ENCODE measurements at regions of chr10 and their contacts with region 1.

Region 1: DNA sequence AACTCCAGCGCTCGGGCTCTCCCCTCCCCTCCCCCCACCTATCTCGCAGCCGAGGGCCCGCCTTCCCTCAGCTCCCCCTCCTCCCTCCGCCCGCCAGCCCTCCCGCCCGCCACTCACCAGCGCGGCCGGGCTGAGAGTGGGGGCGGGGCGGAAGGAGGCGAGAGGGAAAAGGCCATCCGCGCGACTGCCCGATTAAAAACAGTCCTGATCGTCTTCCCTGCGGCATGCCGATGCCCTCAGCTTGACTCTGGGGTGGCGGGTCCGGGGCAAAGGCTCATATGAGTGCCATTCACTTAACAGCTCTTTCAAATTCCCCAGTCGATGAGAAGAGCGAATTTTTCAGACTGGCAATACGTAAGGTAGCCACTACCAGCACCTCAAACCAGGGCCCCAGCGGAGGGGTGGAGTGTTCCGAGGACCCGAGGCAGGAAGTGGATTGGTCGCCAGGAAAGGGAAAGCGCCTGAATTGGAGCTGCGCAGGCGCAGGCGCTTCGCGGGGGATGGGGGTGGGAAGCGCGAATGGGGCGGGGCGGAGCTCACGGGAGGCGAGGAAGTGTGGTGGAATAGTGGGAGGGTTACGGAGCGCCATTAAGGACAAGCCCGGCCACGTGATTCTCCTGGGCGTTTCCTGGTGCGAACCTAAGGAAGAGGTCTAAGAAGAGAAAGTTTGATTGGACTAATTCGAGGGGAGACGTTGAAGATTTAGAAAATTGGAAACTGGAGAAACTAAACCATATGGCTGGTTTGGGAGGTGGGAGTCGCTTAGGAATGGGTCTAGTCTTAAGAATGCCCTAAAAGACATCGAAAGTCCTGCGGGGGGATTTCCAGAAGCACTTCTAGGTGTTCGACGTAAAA is at the start of gene UPF2:
- DNase-seq: peak; percentile 99
- H3K4me3 ChIP-seq: peak within 1 kb of the TSS; percentile 99
- H3K27ac ChIP-seq: peak within 1 kb of the TSS; percentile 79
- H3K4me1 ChIP-seq: peaks cover 25% of the 10 kb centered on the region
- CTCF ChIP-seq: no peak
- total RNA-seq, gene UPF2: 24.8 and 28.0 TPM in 2 replicates

Region 2: DNA sequence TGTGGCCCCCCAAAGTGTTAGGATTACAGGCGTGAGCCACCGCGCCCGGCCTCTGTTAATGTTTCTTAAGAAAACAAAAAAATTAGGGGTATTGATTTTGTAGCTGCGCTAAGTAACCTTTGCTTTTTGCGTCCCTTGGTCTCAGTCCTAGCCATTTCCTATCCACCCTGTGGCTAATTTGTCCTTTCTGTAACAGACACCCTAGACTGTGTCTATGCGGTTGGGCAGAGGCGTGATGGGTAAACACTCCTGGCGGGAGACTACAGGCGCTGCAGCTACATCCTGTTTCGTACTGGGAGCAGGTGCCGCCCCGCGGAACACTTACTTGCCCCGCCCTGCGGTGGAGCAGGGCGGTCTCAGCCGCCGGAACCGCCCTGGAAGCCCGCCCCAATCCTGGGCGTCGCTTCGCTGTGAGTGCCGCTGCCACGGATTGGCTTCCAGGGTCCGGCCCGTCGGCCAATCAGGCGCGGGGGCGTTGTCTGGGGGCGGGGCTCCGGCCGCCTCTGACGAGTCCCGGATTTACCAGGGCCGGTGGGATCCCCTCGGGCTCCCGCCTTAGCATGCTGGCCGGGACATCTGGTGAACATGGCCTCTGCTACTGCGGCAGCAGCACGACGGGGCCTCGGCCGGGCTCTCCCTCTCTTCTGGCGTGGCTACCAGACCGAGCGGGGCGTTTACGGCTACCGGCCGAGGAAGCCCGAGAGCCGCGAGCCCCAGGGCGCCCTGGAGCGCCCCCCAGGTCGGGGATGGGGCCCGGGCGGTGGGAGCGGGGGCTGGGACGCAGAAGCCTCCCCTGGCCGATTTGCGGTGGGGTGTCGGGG is 25.6 kb after region 1 on chr10 and contains the start of gene DHTKD1:
- CTCF ChIA-PET with region 1: interaction called, 3 read pairs
- POLR2A ChIA-PET with region 1: interaction called, 13 read pairs
- intact Hi-C with region 1: loop called (anchors 1 kb)
- DNase-seq: peak; percentile 99
- H3K4me3 ChIP-seq: peak within 1 kb of the TSS; percentile 86
- H3K27ac ChIP-seq: peak within 1 kb of the TSS; percentile 76
- H3K4me1 ChIP-seq: peaks cover 45% of the 10 kb centered on the region
- CTCF ChIP-seq: peak; percentile 50; the same call in 1 of the 2 replicates
- total RNA-seq, gene DHTKD1: 46.5 and 53.1 TPM in 2 replicates

Region 3: DNA sequence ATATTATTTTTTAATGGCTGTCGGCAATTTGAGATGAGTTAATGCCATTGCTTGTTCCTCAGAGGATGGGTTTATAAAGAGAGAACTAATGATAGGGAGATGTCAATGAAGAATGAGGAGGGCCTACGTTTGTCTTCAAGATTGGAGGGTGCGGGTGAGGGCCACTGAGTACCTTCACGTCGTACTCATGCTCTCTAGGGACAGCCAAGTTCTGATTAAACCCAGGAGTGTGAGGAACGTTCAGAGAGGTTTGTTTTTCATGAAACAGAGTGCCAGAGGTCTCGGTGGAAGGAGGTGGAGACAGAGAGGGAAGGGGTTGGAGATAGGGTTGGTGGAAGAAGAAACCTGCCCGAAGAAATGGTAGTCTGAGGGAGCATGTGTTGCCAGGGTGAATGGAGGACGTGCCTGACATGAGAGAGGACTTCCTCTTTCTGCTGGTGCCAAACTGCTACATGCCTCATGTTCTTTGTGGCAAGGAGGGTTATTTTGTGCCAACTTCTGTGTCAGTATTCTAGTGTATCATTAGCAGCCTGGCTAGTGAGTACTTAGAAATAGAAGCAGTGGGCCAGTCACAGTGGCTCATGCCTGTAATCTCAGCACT is 34.7 kb after region 1 on chr10:
- CTCF ChIA-PET with region 1: interaction called, 3 read pairs
- POLR2A ChIA-PET with region 1: interaction called, 13 read pairs
- intact Hi-C with region 1: no loop called
- DNase-seq: peak; percentile 65
- H3K4me3 ChIP-seq: peak overlapping the region; percentile 6
- H3K27ac ChIP-seq: peak overlapping the region; percentile 63
- H3K4me1 ChIP-seq: peaks cover 63% of the 10 kb centered on the region
- CTCF ChIP-seq: no peak

Region 4: DNA sequence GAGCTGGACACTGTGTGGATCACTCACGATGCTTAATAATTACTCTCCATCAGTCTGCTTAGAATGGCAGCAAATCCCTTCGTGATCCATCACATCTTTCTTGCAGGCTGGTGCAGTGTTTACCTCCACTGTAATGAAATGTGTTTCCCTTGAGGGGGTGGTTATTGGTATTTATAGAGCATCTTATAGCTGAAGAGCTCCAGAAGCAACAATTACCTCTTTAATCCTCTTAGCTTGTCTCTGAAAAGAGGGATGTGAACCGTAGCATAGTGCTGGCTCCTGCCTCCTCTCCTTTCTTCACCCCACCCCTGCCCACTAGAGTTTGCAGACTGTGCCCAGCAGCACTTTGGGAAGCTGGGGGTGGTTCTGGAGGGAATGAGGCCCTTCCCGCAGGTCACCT is 438.9 kb after region 1 on chr10:
- CTCF ChIA-PET with region 1: no interaction called
- POLR2A ChIA-PET with region 1: no interaction called
- intact Hi-C with region 1: no loop called
- DNase-seq: no peak
- H3K4me3 ChIP-seq: no peak overlapping the region
- H3K27ac ChIP-seq: no peak overlapping the region
- H3K4me1 ChIP-seq: peaks cover 39% of the 10 kb centered on the region
- CTCF ChIP-seq: no peak